Activated CD4-positive, alpha-beta memory T cell treated with anti-CD3 and anti-CD28 coated beads, Interleukin-2, amount 10 ng/mL, durations not matched to agents 7 days and 5 days (primary cell): ENCODE measurements at regions of chr15 and their contacts with region 1.

Region 1: DNA sequence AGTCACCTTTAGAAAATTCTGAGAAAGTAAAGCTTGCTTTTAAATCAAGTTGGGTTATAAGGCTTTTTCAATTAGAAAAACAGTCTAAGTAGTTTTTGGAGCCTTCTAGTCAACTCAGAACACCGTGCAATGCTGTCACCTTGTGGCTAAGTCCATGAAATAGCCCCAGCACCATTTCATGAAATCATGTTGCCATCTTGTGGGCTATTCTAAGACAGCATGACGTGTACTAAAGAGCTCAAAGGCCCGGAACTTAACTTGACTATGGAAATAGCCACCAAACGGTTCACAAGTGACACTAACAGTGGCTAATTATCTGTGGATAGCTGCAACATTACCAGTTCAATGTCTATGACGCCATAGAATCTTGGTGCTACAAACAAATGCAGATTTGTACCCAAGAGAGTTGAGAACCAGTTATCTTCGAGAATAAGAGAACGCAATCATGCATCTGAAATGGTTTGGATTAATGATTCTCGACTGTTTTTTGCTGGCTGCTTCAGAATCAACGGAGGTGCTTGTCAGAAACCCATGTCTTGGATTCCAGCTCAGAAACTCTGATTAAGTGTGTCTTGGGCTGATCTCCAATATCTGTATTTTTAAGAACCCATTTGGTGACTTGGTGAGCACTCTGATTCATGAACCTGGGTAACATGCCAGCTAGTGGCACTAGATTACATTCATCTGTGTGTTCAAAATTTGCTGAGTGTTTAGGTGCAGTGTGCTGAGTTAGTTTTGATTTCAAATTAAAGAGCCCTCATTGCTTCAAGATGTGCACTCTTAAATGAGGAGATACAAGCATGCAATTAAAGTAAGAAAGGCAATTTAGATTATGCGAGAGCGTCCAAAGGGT is 111.2 kb upstream of the MCTP2 start:
- DNase-seq: peak; percentile 62
- H3K4me3 Mint-ChIP-seq: no peak overlapping the region
- H3K27ac Mint-ChIP-seq: no peak overlapping the region
- H3K4me1 Mint-ChIP-seq: peaks cover under 1% of the 10 kb centered on the region
- H3K27me3 Mint-ChIP-seq: peaks cover 1% of the 10 kb centered on the region

Region 2: DNA sequence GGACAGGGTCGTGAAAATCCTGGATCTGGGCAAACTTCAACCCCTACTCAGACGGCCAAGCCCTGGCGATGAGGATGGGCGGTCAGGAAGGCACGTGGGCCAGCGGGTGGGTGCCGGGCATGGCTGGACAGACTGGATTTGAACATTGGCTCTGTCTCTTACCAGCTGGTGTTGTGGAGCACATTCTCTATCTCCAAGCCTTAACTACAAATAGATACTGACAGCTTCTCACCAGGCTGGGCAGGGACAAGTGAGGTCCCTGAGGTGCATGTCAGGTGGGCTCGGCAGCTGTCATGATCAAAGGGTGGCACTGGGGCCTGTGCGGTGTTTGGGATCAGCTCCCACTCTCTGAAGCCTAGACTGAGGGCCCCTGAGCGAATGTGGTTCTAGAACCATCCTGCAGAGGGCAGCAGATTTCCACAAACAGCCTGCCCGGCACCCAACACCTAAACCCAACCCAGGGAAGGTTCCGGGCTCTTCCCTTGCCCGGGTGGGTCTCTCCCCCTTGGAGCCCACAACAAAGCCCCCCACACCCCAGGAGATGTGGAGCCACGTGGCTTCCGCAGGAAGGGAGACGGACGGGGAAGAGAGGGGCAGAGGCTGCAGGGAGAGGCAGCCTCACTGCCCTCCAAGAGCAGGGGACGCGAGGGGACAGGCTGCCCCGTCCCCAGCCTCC is 1089.6 kb before region 1 on chr15:
- CTCF ChIA-PET with region 1: interaction called, 31 read pairs
- POLR2A ChIA-PET with region 1: no interaction called
- DNase-seq: peak; percentile 68
- H3K4me3 Mint-ChIP-seq: no peak overlapping the region
- H3K27ac Mint-ChIP-seq: no peak overlapping the region
- H3K4me1 Mint-ChIP-seq: peaks cover 15% of the 10 kb centered on the region
- H3K27me3 Mint-ChIP-seq: no peaks in the 10 kb centered on the region

Region 3: GRCh38 chr15:93035953-93036800 is 1084.0 kb before region 1 on chr15:
- CTCF ChIA-PET with region 1: interaction called, 15 read pairs
- POLR2A ChIA-PET with region 1: no interaction called
- DNase-seq: peak; percentile 44
- H3K4me3 Mint-ChIP-seq: no peak overlapping the region
- H3K27ac Mint-ChIP-seq: no peak overlapping the region
- H3K4me1 Mint-ChIP-seq: peaks cover 5% of the 10 kb centered on the region
- H3K27me3 Mint-ChIP-seq: peaks cover 2% of the 10 kb centered on the region

Region 4: GRCh38 chr15:94131875-94132274 is 11.7 kb after region 1 on chr15:
- CTCF ChIA-PET with region 1: interaction called, 12 read pairs
- POLR2A ChIA-PET with region 1: no interaction called
- DNase-seq: no peak
- H3K4me3 Mint-ChIP-seq: no peak overlapping the region
- H3K27ac Mint-ChIP-seq: no peak overlapping the region
- H3K4me1 Mint-ChIP-seq: no peaks in the 10 kb centered on the region
- H3K27me3 Mint-ChIP-seq: peaks cover 36% of the 10 kb centered on the region